OCI-LY7 (cell line): ENCODE measurements at regions of chr3 and their contacts with region 1.

Region 1: GRCh38 chr3:194333212-194333980 is 17.7 kb downstream of the CPN2 start:
- DNase-seq: peak; percentile 78
- H3K4me3 ChIP-seq: peak overlapping the region; percentile 44
- H3K27ac ChIP-seq: no peak overlapping the region
- H3K4me1 ChIP-seq: no peaks in the 10 kb centered on the region
- CTCF ChIP-seq: peak; percentile 98

Region 2: DNA sequence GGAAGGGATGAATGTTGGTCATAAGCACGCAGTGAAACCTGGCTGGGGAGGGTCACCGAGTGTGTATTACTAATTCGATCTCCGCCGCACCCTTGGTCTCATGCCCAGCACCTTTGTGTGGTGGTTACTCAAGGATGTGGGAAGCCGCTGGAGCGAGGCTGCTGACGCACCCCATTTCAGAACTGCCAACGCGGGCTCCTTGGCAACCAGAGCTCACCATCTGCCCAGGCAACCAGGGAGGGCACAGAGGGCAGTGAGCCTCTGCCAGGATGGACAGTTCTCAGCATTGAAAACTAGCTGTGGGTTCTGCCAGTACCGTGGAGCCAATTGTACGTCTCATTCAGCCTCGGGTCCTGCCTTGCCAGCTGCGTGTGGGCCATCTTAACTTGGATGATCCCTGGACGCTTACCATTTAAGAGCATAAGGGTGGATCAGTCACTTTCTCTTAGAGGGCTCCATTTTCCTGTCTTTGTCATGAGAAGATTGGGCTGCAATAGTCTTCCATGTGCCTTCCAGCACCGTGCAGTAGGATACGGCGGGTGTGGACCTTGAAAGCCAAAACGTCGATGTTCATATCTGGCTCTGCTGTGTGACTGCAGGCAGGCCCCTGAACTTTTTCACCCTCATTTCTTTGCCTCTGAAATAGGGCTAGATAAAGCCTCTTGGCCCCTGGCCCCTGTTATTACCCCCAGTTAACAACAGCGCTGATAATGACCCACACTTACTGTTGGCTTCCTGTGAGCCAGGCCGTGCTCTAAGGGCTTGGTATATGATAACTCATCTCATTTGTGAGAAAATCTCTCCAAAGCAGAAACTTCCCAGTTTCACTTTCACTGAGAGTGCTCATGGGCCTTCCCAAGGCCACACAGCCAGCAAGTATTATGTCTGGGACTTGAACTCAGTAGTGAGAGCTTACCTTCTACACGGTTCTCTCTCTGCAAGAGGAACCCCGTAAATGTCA is 501.6 kb before region 1 on chr3:
- CTCF ChIA-PET with region 1: no interaction called
- POLR2A ChIA-PET with region 1: no interaction called
- intact Hi-C with region 1: no loop called
- DNase-seq: peak; percentile 19
- H3K4me3 ChIP-seq: no peak overlapping the region
- H3K27ac ChIP-seq: no peak overlapping the region
- H3K4me1 ChIP-seq: peaks cover 6% of the 10 kb centered on the region
- CTCF ChIP-seq: no peak

Region 3: GRCh38 chr3:194344012-194344411 is 10.6 kb after region 1 on chr3:
- CTCF ChIA-PET with region 1: no interaction called
- POLR2A ChIA-PET with region 1: no interaction called
- intact Hi-C with region 1: no loop called
- DNase-seq: peak; percentile 58
- H3K4me3 ChIP-seq: no peak overlapping the region
- H3K27ac ChIP-seq: no peak overlapping the region
- H3K4me1 ChIP-seq: no peaks in the 10 kb centered on the region
- CTCF ChIP-seq: peak; percentile 98

Region 4: GRCh38 chr3:194404365-194405140 is 71.2 kb after region 1 on chr3:
- CTCF ChIA-PET with region 1: interaction called, 3 read pairs
- POLR2A ChIA-PET with region 1: no interaction called
- intact Hi-C with region 1: loop called (anchors 1 kb)
- DNase-seq: peak; percentile 62
- H3K4me3 ChIP-seq: no peak overlapping the region
- H3K27ac ChIP-seq: no peak overlapping the region
- H3K4me1 ChIP-seq: peaks cover 8% of the 10 kb centered on the region
- CTCF ChIP-seq: peak; percentile 99

Region 5: GRCh38 chr3:194573691-194574437 is 240.5 kb after region 1 on chr3:
- CTCF ChIA-PET with region 1: no interaction called
- POLR2A ChIA-PET with region 1: no interaction called
- intact Hi-C with region 1: loop called (anchors 5 kb)
- DNase-seq: peak; percentile 47
- H3K4me3 ChIP-seq: no peak overlapping the region
- H3K27ac ChIP-seq: no peak overlapping the region
- H3K4me1 ChIP-seq: no peaks in the 10 kb centered on the region
- CTCF ChIP-seq: peak; percentile 74

Region 6: GRCh38 chr3:194592798-194593752 is 259.7 kb after region 1 on chr3:
- CTCF ChIA-PET with region 1: no interaction called
- POLR2A ChIA-PET with region 1: no interaction called
- intact Hi-C with region 1: loop called (anchors 5 kb)
- DNase-seq: peak; percentile 20
- H3K4me3 ChIP-seq: no peak overlapping the region
- H3K27ac ChIP-seq: no peak overlapping the region
- H3K4me1 ChIP-seq: peaks cover 12% of the 10 kb centered on the region
- CTCF ChIP-seq: no peak